PC-3 (cell line): ENCODE measurements at regions of chr4 and their contacts with region 1.

Region 1: DNA sequence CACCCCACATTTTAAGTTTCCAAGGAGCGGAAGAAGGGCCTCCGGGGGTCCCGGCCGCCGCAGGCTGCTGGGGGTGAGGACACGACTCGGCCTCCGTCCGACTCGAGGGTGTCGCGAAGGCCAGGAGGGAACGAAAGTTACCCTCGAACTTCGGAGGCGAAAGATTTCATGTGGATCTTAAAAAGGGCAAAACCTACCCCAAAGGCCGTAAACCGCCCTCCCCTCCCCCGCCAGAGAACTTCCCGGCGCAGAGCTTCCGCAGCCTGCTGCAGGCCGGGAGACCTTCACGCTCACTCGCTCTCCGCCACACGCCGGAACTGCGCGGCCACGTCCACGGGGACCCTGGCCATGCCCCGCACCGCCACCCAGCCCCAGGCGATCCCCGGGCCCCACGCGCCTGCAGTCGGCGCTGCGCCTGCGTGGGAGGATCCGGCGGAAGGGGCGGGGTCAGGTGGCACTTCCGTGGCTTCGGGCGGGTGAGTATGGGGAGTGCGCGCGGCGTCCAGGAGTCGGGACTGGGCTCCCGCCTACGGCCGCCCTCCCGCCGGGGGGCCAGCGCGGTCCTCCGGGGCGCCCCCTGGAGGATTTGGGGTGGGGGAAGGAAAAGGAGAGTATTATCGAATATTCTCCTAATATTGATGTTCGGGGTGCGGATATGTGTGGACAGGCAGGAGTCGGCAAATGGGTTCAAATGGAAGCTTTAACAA is at the start of gene MMAA:
- DNase-seq: peak; percentile 95
- ATAC-seq: peak; percentile 91
- H3K4me3 ChIP-seq: peak within 1 kb of the TSS; percentile 91
- H3K27ac ChIP-seq: peak within 1 kb of the TSS; percentile 69
- H3K4me1 ChIP-seq: peaks cover 23% of the 10 kb centered on the region
- H3K27me3 ChIP-seq: no peaks in the 10 kb centered on the region
- CTCF ChIP-seq: peak; percentile 83
- total RNA-seq, gene MMAA: 2.6 and 5.3 TPM in 2 replicates

Region 2: DNA sequence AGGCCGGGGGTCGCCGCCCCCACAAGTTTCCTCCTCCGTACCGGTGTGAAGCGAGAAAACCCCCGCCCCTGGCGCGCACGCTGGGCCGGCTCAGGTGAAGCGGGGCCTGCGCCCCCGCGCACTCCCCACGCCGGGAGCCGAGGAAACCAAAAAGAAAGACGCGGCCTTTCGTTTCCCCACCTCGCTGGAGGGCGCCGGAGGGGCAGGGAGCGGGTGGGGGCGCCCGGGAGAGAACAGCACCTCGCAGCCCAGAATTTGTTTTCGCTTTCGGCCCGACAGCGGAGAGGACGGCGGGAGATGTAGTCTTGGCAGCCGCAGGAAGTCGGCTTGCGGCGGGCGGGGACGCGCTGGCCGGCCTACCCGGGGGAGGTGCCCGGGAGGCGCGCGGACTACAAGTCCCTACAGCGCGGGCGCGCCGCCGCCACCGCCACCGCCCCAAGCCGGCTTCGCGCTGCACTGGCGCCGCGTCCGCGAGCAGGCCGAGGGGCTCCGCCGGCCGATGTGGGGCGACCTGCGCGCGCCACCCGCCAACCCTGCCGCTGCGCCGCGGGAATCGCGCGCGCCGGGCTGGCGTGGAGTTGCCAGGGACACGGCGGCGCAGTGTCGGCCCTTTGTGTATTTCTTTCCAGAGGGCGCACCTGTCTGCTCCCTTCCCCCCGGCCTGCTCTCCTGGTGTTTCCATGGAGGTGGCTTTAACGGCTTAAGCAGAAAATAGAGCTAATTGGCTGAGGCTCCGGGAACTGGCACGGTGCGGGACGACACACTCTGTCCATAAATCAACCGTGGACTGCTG is 438.6 kb before region 1 on chr4 and contains the start of gene OTUD4:
- CTCF ChIA-PET with region 1: interaction called, 3 read pairs
- POLR2A ChIA-PET with region 1: no interaction called
- intact Hi-C with region 1: loop called (anchors 2 kb)
- DNase-seq: peak; percentile 96
- ATAC-seq: peak; percentile 79
- H3K4me3 ChIP-seq: peak within 1 kb of the TSS; percentile 87
- H3K27ac ChIP-seq: peak within 1 kb of the TSS; percentile 78
- H3K4me1 ChIP-seq: peaks cover 21% of the 10 kb centered on the region
- H3K27me3 ChIP-seq: no peaks in the 10 kb centered on the region
- CTCF ChIP-seq: no peak; the same call in 1 of the 2 replicates
- total RNA-seq, gene OTUD4: 13.6 and 20.6 TPM in 2 replicates

Region 3: DNA sequence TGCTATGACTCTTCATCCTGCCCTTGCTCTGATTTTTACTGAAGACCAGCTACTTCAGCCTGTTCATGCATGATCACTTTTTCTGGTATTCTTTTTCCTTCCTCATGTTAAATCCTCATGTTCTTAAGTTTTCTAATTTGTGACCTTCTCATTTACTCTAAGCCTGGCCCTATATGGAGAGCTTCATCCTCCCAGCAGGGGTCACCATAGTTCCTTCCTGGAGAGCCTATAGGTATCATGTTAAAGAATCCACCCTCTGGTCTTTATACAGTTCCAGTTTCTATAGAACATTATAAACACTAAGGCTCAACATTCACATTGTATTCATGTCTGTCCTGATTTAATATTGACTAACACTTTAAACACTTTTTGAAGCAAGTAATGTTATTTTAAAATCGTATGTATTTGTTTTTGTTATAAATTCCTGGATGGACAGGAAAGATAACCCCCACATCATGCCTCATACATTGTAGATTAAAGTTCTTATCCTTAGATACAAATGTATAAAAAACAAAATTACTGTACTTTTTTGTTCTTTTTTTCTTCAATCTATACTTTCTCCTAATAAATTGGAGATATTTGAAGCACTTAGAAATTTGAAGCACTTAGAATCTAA is 384.9 kb before region 1 on chr4:
- CTCF ChIA-PET with region 1: interaction called, 18 read pairs
- POLR2A ChIA-PET with region 1: no interaction called
- intact Hi-C with region 1: no loop called
- DNase-seq: peak; percentile 87
- ATAC-seq: peak; percentile 100
- H3K4me3 ChIP-seq: no peak overlapping the region
- H3K27ac ChIP-seq: no peak overlapping the region
- H3K4me1 ChIP-seq: 0 out of 2 replicates have a peak, but pooled peaks cover 5% of the 10 kb centered on the region
- H3K27me3 ChIP-seq: no peaks in the 10 kb centered on the region
- CTCF ChIP-seq: peak; percentile 98

Region 4: DNA sequence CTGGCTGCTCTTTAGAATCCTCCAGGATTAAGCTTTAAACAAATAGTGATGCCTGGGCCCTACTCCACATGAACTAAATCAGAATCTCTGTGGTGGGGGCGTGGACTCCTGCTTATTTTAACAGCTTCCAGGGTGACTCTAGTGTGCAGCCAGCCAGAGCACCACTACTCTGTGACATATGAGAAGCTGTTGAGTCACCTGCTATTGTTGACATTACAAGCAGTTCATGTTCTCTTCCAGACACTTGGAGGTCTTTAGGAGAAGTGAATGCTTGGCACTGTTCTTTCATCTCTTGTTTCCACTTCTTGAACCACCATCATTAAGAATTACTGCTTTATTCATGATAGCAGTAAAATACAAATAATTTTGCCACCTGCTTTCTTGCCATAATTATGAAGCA is 60.4 kb after region 1 on chr4:
- CTCF ChIA-PET with region 1: no interaction called
- POLR2A ChIA-PET with region 1: interaction called, 13 read pairs
- intact Hi-C with region 1: no loop called
- DNase-seq: peak; percentile 92
- ATAC-seq: peak; percentile 100
- H3K4me3 ChIP-seq: no peak overlapping the region
- H3K27ac ChIP-seq: peak overlapping the region; percentile 32
- H3K4me1 ChIP-seq: peaks cover 16% of the 10 kb centered on the region
- H3K27me3 ChIP-seq: no peaks in the 10 kb centered on the region
- CTCF ChIP-seq: no peak

Region 5: DNA sequence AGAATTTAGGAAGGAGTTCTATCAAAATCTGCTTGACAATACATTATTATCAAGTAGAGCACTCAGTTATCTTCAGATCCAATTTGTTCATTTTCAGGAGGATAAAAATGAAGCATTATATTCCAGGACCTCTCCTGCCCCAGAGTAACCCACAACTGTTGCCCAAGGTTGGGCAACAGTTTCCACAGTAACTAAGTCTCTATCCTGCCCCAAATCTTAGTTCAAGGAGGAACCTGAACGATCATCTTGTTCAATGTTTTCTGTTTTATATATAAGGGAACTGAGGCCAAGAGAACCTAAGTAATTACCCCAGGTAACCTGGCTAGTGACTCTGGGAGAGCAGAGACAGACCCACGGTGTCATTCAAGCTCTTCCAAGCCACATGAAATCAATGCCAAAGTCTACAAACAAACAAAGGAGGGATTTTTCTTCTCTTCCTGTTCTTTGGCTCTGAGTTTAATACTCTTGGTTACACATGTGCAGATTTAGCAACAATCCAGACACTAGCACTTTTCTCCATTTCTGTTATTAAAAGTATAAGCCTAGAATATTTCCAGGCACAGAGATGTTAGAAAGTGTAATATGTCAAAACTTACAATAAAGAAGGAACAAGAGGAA is 166.4 kb after region 1 on chr4:
- CTCF ChIA-PET with region 1: no interaction called
- POLR2A ChIA-PET with region 1: no interaction called
- intact Hi-C with region 1: loop called (anchors 5 kb)
- DNase-seq: peak; percentile 48
- ATAC-seq: peak; percentile 25; the same call in 1 of the 2 replicates
- H3K4me3 ChIP-seq: no peak overlapping the region
- H3K27ac ChIP-seq: peak overlapping the region; percentile 1; the same call in 1 of the 2 replicates
- H3K4me1 ChIP-seq: peaks cover 54% of the 10 kb centered on the region
- H3K27me3 ChIP-seq: no peaks in the 10 kb centered on the region
- CTCF ChIP-seq: no peak

Region 6: GRCh38 chr4:145887241-145887991 is 268.3 kb after region 1 on chr4:
- CTCF ChIA-PET with region 1: no interaction called
- POLR2A ChIA-PET with region 1: no interaction called
- intact Hi-C with region 1: loop called (anchors 1 kb)
- DNase-seq: peak; percentile 22
- ATAC-seq: peak; percentile 56
- H3K4me3 ChIP-seq: no peak overlapping the region
- H3K27ac ChIP-seq: no peak overlapping the region
- H3K4me1 ChIP-seq: no peaks in the 10 kb centered on the region
- H3K27me3 ChIP-seq: no peaks in the 10 kb centered on the region
- CTCF ChIP-seq: peak; percentile 24; the same call in 1 of the 2 replicates

Region 7: DNA sequence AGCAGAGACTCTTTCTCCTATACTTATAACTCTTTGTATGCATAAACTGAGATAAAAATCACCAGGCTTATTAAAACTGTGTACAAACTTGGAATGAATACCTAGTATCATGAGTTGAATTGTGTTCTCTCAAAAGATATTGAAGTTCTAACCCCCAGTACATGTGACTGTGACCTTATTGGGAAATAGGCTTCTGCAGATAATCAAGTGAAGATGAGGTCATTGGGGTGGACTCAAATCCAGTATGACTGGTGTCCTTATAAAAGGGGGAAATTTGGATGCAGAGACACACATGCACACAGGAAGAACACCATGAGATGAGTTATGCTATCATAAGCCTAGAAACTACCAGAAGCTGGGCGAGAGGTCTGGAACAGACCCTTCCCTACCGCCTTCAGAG is 293.3 kb after region 1 on chr4:
- CTCF ChIA-PET with region 1: no interaction called
- POLR2A ChIA-PET with region 1: no interaction called
- intact Hi-C with region 1: no loop called
- DNase-seq: no peak
- ATAC-seq: no peak
- H3K4me3 ChIP-seq: no peak overlapping the region
- H3K27ac ChIP-seq: no peak overlapping the region
- H3K4me1 ChIP-seq: peaks cover 15% of the 10 kb centered on the region
- H3K27me3 ChIP-seq: no peaks in the 10 kb centered on the region
- CTCF ChIP-seq: no peak